Activated T-helper 2 cell treated with anti-CD3 and anti-CD28 coated beads, Interferon-gamma antibody, Interleukin-2, Interleukin-4, amounts not matched to agents 10 μg/mL and 5 μg/mL and 100 μg/mL, durations not matched to agents 14 hours and 24 hours and 36 hours (primary cell): ENCODE measurements at regions of chr18 and their contacts with region 1.

Region 1: DNA sequence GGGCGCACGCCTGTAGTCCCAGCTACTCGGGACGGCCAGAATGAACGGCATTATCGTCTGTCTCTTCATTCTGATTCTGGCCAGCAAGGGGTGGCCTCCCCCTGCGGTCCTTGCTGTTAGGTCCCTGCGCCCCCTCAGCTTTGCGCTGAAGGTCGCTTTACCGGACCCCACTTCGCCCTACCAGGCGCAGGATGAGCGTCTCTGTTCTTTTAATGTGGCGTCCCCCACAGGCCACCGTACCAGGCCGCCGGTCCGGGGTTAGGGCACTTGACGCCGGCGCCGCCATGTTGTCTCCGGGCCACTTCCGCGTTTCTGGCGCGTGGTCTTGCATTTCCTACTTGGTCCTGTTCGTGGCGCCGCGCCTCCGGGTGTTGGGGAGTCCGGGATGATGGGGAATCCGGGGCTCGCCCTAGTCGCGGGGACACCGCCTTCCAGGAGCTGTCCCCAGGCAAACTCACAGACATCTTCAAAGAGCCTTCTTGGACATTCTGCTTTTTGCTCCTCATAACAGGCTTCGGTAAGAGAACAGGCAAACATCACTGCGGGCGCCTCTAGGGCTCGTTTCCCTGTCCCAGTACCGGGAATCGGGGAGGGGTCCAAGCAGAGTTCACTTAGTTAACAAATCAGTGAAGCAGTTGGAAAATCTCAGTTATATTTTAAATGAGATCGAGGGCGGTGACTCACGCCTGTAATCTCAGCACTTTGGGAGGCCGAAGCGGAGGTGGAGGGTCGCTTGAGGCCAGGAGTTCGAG is 8.5 kb upstream of the NARS1 start:
- DNase-seq: peak; percentile 91
- H3K4me3 Mint-ChIP-seq: peak overlapping the region; percentile 92
- H3K27ac Mint-ChIP-seq: peak overlapping the region; percentile 86
- H3K4me1 Mint-ChIP-seq: peaks cover 14% of the 10 kb centered on the region
- H3K27me3 Mint-ChIP-seq: no peaks in the 10 kb centered on the region

Region 2: GRCh38 chr18:56770873-56771272 is 859.3 kb before region 1 on chr18:
- intact Hi-C with region 1: no loop called
- DNase-seq: no peak
- H3K4me3 Mint-ChIP-seq: no peak overlapping the region
- H3K27ac Mint-ChIP-seq: no peak overlapping the region
- H3K4me1 Mint-ChIP-seq: no peaks in the 10 kb centered on the region
- H3K27me3 Mint-ChIP-seq: no peaks in the 10 kb centered on the region

Region 3: DNA sequence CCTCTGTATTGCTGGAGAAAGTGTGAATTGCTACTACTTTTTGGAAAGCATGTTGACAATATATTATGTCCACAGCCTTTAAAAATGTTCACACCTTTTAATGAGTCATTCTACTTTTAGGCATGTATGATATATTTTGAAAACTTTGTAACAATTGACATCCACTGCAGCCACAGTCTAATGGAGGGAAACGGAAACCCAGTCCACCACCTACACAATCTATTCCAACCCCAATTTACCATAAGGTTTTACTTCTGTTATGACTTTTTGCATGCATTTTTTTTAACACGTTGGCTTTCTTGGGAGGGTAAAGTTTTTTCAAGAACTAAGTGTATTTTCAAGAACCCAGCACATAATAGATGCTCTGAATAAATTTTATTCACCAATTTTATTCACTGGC is 211.4 kb after region 1 on chr18:
- intact Hi-C with region 1: loop called (anchors 5 kb)
- DNase-seq: no peak
- H3K4me3 Mint-ChIP-seq: no peak overlapping the region
- H3K27ac Mint-ChIP-seq: no peak overlapping the region
- H3K4me1 Mint-ChIP-seq: peaks cover 21% of the 10 kb centered on the region
- H3K27me3 Mint-ChIP-seq: peaks cover 45% of the 10 kb centered on the region

Region 4: GRCh38 chr18:58128381-58129374 is 498.5 kb after region 1 on chr18:
- intact Hi-C with region 1: loop called (anchors 5 kb)
- DNase-seq: no peak
- H3K4me3 Mint-ChIP-seq: no peak overlapping the region
- H3K27ac Mint-ChIP-seq: no peak overlapping the region
- H3K4me1 Mint-ChIP-seq: no peaks in the 10 kb centered on the region
- H3K27me3 Mint-ChIP-seq: no peaks in the 10 kb centered on the region

Region 5: DNA sequence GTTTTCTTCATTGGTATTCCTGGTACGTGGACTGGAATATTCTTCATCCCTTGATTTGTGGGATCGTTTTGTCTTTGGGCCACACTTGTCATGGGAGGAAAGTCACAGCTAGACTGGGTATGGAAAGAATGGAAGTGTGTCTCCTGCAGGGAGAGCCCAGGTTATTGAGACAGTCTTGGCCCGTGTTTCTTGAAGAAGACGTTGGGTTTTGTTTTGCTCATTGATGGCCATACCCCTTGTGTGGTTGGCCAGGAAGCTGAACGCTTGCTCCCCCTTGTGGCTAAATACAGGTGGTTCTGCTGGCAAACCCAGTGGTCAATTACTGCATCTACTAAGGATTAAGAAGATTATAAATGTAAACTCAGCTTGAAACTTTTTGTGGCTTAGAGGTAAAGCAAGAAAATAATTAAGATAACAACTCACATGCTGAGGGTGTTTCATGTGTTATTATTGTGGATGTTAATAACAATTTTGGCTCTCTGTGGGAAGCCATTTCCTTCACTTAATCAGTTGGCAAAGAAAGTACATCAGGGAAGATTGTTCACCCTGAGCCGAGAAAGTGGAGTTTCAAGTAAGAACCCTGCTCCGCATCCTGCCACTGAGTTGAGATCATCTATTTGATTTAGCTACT is 505.6 kb after region 1 on chr18:
- intact Hi-C with region 1: loop called (anchors 5 kb)
- DNase-seq: peak; percentile 24
- H3K4me3 Mint-ChIP-seq: no peak overlapping the region
- H3K27ac Mint-ChIP-seq: no peak overlapping the region
- H3K4me1 Mint-ChIP-seq: peaks cover 9% of the 10 kb centered on the region
- H3K27me3 Mint-ChIP-seq: peaks cover 11% of the 10 kb centered on the region